Dorsolateral prefrontal cortex (tissue), 120 donors: ENCODE measurements at regions of chr10 and their contacts with region 1.

Region 1: DNA sequence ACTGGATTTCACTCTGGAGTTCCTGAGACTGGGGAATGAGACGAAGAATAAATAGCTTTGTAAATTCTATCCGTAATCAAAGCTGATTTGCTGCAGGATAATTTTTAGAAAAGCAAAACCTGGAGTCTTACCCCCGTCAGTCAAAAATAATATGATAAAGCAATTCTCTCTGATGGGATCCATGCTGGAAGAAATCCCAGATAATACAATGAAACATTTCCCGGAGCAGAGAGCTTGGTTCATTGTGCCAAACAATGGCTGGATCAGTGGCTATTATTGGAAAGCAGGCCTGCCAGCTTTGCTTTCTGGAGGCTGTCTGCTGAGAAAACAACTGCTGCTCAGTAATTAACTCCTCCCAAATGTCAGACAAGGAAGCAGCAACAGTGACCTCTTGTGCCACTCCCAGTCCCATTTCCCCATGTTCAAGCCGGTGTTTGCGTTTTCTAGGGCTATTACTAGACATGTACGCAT is 609.4 kb upstream of the PCDH15 start:
- DNase-seq: peak; percentile 9 to 79 (median 58)
- H3K4me3 ChIP-seq: peak overlapping the region in 26 of 59 donors; percentile 2 to 36 (median 19)
- H3K27ac ChIP-seq: peak overlapping the region in 3 of 59 donors; percentile 25 to 56 (median 42)
- H3K27me3 ChIP-seq: peaks cover 0 to 24% (median 0%) of the 10 kb centered on the region in 45 donors
- CTCF ChIP-seq: peak in 53 of 56 donors; percentile 17 to 79 (median 56)

Region 2: DNA sequence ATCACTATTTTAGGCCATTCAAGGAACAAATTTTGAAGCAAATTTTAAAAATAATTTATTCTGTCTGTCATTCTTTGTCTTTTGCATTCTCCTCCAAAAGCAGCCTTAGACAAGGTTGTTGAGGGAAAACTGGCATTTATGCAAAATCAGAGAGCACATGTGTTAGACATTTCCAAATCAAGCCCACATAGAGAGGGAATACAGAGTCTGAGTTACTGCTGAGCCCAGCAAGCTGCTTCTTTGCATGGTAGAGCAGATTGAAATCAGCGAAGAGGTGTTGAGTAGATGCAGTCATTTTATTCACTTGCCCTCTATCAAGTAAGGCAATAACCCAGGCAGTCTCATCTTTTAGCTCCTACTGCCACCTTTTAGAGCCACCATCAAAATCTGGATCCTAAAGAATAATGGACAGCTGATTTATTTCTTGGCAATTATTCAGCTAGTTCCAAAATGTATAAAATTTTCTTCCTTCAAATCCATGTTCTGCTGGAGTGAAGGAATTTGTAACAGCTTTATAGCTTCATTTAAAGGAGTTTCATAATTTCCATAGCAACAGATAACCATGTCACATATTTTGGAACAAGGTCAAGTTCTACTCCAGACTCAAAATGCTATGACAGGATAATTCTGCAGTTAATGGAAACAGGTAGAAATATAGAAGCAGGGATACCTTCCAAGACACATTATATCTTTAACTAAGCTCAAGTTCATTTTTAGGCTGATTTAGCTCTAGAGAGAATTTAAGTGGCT is 602.1 kb before region 1 on chr10:
- intact Hi-C with region 1: no loop called
- DNase-seq: no peak
- H3K4me3 ChIP-seq: no peak overlapping the region
- H3K27ac ChIP-seq: no peak overlapping the region
- H3K27me3 ChIP-seq: no peaks in the 10 kb centered on the region
- CTCF ChIP-seq: no peak

Region 3: GRCh38 chr10:55091691-55092328 is 318.6 kb before region 1 on chr10:
- intact Hi-C with region 1: loop called in 1 of 2 experiments (anchors 10 kb)
- DNase-seq: no peak
- H3K4me3 ChIP-seq: no peak overlapping the region
- H3K27ac ChIP-seq: no peak overlapping the region
- H3K27me3 ChIP-seq: peaks cover 0 to 4% (median 0%) of the 10 kb centered on the region in 45 donors
- CTCF ChIP-seq: peak; percentile 62 to 98 (median 78)

Region 4: GRCh38 chr10:55263327-55263726 is 147.1 kb before region 1 on chr10:
- intact Hi-C with region 1: no loop called
- DNase-seq: no peak
- H3K4me3 ChIP-seq: no peak overlapping the region
- H3K27ac ChIP-seq: no peak overlapping the region
- H3K27me3 ChIP-seq: peaks cover 0 to 9% (median 0%) of the 10 kb centered on the region in 45 donors
- CTCF ChIP-seq: no peak